ENCODE measurements at regions of chr11 and their contacts with region 1.

Region 1: GRCh38 chr11:103594283-103594682 is 442.2 kb upstream of the DDI1 start:
- DNase-seq: no peak
- ATAC-seq: no peak
- H3K4me3 ChIP-seq: no peak overlapping the region
- H3K27ac ChIP-seq: no peak overlapping the region
- H3K4me1 ChIP-seq: no peaks in the 10 kb centered on the region
- H3K27me3 ChIP-seq: no peaks in the 10 kb centered on the region
- CTCF ChIP-seq: no peak
- POLR2A ChIP-seq: no peak

Region 2: DNA sequence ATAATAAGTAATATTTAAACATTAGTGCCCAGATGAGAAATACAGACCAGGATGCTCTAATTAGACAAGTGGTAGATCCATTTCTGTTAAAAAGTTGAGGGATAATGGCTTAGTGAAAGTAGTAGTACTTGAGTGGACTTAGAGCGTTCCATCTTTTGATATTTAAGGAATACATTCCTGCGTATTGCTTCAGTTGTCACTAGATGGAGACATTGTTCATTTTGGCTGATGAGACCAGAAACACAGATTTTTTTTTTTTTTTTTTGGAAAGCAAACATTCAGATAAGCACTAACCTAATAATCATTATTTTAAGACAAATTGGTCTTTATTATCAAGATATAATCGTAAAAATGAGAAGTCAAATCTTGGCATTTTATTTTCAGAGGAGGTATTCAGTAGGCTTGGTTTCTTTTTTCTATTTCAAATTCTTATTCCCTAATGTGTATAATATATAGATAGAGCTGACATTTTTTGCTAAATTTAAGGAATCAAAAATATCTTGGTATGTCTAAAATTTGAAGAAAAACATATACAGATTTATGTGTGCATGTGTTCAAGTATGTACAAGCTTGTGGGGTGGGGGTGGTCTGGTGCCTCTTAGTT is 392.1 kb before region 1 on chr11:
- intact Hi-C with region 1: loop called in 1 of 10 experiments (anchors 10 kb)
- DNase-seq: no peak
- ATAC-seq: peak in 1 of 4 donors; percentile 34
- H3K4me3 ChIP-seq: no peak overlapping the region
- H3K27ac ChIP-seq: no peak overlapping the region
- H3K4me1 ChIP-seq: no peaks in the 10 kb centered on the region
- H3K27me3 ChIP-seq: no peaks in the 10 kb centered on the region
- CTCF ChIP-seq: peak; percentile 26 to 62 (median 42)
- POLR2A ChIP-seq: no peak

Region 3: GRCh38 chr11:103326070-103326794 is 268.1 kb before region 1 on chr11:
- intact Hi-C with region 1: loop called in 1 of 10 experiments (anchors 5 kb)
- DNase-seq: peak in 4 of 5 donors; percentile 15 to 42 (median 28)
- ATAC-seq: peak in 3 of 4 donors; percentile 77 to 86 (median 83)
- H3K4me3 ChIP-seq: no peak overlapping the region
- H3K27ac ChIP-seq: no peak overlapping the region
- H3K4me1 ChIP-seq: peaks cover 0 to 14% (median 7%) of the 10 kb centered on the region in 12 donors
- H3K27me3 ChIP-seq: no peaks in the 10 kb centered on the region
- CTCF ChIP-seq: peak; percentile 44 to 73 (median 56)
- POLR2A ChIP-seq: no peak

Region 4: GRCh38 chr11:103464420-103464819 is 129.9 kb before region 1 on chr11:
- intact Hi-C with region 1: loop called in 1 of 10 experiments (anchors 10 kb)
- DNase-seq: no peak
- ATAC-seq: no peak
- H3K4me3 ChIP-seq: no peak overlapping the region
- H3K27ac ChIP-seq: no peak overlapping the region
- H3K4me1 ChIP-seq: no peaks in the 10 kb centered on the region
- H3K27me3 ChIP-seq: no peaks in the 10 kb centered on the region
- CTCF ChIP-seq: peak in 1 of 12 donors; percentile 7
- POLR2A ChIP-seq: no peak

Region 5: DNA sequence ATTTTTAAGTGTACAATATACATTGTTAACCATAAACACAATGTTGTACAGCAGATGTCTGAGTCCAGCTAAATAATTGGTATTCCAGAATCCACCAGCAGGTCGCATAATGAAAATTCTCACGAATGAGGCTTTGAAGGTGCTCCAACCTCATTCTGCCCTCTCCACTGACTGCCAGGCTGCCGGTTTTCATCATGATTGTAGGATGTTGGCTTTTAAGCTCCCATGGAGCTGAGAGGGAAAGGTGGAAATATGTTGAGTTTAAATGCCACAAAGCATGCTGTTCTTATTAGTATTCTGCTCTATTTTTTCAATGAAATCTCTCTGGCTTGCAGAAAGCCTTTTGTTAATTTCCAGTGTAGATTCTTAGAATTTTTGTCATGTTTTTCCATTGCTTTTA is 104.9 kb after region 1 on chr11:
- intact Hi-C with region 1: no loop called
- DNase-seq: no peak
- ATAC-seq: no peak
- H3K4me3 ChIP-seq: no peak overlapping the region
- H3K27ac ChIP-seq: no peak overlapping the region
- H3K4me1 ChIP-seq: peaks cover 0 to 8% (median 3%) of the 10 kb centered on the region in 12 donors
- H3K27me3 ChIP-seq: no peaks in the 10 kb centered on the region
- CTCF ChIP-seq: peak in 1 of 12 donors; percentile 5
- POLR2A ChIP-seq: no peak